A549 (cell line): ENCODE measurements at regions of chr17 and their contacts with region 1.

Region 1: DNA sequence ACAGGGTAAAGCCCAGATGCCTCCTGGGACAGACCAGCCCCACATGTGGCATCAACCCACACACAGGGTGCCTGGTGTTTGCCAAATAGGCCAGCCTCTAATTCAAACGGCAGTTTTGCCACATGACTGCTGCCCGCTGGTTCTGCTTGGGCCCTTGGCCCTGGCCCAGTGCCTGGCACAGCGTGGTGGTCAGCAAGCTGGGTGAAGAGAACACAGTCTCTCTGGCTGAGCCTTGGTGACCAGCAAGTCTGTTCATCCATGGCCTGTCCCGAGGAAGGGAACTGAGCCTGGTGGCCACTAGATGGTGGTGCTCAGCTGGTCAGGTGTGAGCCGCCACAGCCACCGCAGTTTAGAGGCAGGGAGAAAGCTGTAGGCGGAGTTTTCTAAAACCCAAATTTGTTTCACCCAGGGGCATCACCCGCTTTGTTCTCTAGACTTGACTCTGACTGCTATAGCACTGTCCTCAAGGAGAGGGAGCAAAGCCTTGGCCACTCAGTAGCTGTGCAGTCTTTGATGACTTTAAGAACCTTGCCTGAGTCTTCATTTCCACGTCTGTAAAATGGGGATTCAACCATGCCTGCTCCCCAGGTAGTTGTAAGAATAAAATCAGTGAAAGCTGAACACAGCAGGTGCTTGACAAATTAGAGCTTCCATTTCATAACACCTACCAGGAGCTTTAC is 4.7 kb upstream of the GFAP start:
- DNase-seq: peak; percentile 89 to 97
- ATAC-seq: peak; percentile 85 to 90
- H3K4me3 ChIP-seq: no peak overlapping the region
- H3K27ac ChIP-seq: peak overlapping the region; percentile 14 to 80; a peak in 4 of 6 replicates
- H3K4me1 ChIP-seq: peaks cover 23% of the 10 kb centered on the region
- CTCF ChIP-seq: peak; percentile 98
- EP300 ChIP-seq: no peak
- POLR2A ChIP-seq: no peak
- RAD21 ChIP-seq: peak; percentile 99

Region 2: GRCh38 chr17:44775136-44775837 is 144.7 kb before region 1 on chr17:
- CTCF ChIA-PET with region 1: interaction called, 13 read pairs
- POLR2A ChIA-PET with region 1: no interaction called
- DNase-seq: peak; percentile 99
- ATAC-seq: peak; percentile 78 to 92
- H3K4me3 ChIP-seq: peak overlapping the region; percentile 54
- H3K27ac ChIP-seq: peak overlapping the region; percentile 13 to 64; a peak in 4 of 6 replicates
- H3K4me1 ChIP-seq: peaks cover 17% of the 10 kb centered on the region
- CTCF ChIP-seq: peak; percentile 34; the same call in 1 of the 3 replicates
- EP300 ChIP-seq: no peak
- POLR2A ChIP-seq: peak; percentile 58
- RAD21 ChIP-seq: peak in 1 of 2 experiments; percentile 8; a peak in 1 of 5 replicates

Region 3: GRCh38 chr17:44884941-44885340 is 35.1 kb before region 1 on chr17:
- CTCF ChIA-PET with region 1: interaction called, 10 read pairs
- POLR2A ChIA-PET with region 1: no interaction called
- DNase-seq: no peak
- ATAC-seq: no peak
- H3K4me3 ChIP-seq: no peak overlapping the region
- H3K27ac ChIP-seq: no peak overlapping the region
- H3K4me1 ChIP-seq: peaks cover 15% of the 10 kb centered on the region
- CTCF ChIP-seq: no peak
- EP300 ChIP-seq: no peak
- POLR2A ChIP-seq: no peak
- RAD21 ChIP-seq: no peak

Region 4: DNA sequence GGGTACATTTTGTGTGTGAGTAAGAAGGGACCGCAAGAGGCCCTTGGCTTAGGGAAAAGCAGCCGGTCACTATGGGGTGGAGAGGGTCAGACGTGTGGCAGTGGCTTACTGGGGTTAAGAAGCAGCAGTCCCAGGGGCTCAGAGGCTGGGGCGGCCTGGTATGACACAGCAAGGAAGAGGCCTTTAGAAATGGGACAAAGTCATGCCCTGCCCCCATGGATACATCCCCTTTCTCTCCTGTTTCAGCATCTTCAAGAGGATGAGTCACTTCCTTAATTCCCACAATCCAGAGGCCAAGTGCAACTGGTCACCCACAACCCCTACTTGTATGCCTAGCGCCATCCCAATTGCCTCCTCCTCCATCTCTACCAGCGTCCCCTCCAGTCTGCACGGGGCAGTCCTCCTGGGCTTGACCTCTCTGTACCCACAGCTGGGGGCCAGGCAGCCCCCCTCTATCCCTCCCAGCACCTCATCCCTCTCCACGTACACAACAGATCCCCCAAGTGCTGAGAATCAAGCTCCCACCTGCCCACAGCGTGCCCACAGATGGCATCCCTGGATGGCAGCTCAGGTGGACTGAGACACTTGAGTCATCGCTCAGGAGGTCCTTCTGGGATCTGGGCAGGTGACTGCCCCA is 13.9 kb before region 1 on chr17:
- CTCF ChIA-PET with region 1: interaction called, 217 read pairs
- POLR2A ChIA-PET with region 1: no interaction called
- DNase-seq: peak; percentile 74 to 89
- ATAC-seq: peak; percentile 61 to 68
- H3K4me3 ChIP-seq: no peak overlapping the region
- H3K27ac ChIP-seq: peak overlapping the region; percentile 91 to 94
- H3K4me1 ChIP-seq: peaks cover 63% of the 10 kb centered on the region
- CTCF ChIP-seq: no peak
- EP300 ChIP-seq: peak in 1 of 2 experiments; percentile 59; a peak in 3 of 5 replicates
- POLR2A ChIP-seq: no peak
- RAD21 ChIP-seq: no peak

Region 5: GRCh38 chr17:44968226-44969143 is 48.5 kb after region 1 on chr17 and contains the start of gene C1QL1:
- CTCF ChIA-PET with region 1: interaction called, 752 read pairs
- POLR2A ChIA-PET with region 1: no interaction called
- DNase-seq: peak; percentile 90 to 96
- ATAC-seq: peak; percentile 76 to 91
- H3K4me3 ChIP-seq: peak within 1 kb of the TSS; percentile 59
- H3K27ac ChIP-seq: peak within 1 kb of the TSS; percentile 65 to 82
- H3K4me1 ChIP-seq: peaks cover 35% of the 10 kb centered on the region
- CTCF ChIP-seq: no peak
- EP300 ChIP-seq: no peak
- POLR2A ChIP-seq: peak; percentile 31; the same call in 1 of the 2 replicates
- RAD21 ChIP-seq: no peak
- polyA plus RNA-seq, gene C1QL1: 1.9 and 2.6 TPM in 2 replicates

Region 6: DNA sequence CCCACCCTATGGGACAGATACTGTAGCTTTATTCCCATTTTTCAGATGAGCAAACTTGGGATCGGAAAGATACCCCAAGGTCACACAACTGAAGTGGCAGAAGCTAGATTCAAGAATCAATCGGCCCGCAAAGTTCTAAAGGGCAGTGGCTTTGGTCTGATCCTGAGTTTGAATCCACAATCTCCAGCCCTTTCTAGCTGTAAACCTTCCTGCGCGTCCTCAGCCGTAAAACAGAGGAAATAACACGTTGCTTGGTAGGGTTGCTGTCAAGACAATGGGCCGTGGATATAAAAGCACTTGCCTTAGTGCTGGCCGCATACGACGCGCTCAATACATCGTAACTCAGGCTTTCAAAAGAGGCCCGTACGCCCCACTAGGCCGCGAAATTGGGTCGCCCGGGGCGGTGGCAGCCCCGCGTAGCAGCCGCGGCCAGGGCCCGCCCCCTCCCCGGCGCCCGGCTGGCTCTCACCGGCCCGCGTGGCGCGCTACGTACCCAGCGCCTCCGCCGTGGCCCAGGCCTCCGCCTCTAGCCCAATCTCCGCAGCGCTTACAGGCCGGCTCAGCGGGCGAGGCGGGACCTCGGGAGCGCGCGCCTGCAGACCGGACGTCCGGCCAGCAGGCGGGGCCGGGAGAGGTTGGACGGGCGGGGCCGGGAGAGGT is 131.2 kb after region 1 on chr17 and contains the start of gene DCAKD:
- CTCF ChIA-PET with region 1: interaction called, 1,853 read pairs
- POLR2A ChIA-PET with region 1: no interaction called
- DNase-seq: peak; percentile 93 to 97
- ATAC-seq: peak; percentile 97 to 99
- H3K4me3 ChIP-seq: peak within 1 kb of the TSS; percentile 54
- H3K27ac ChIP-seq: peak within 1 kb of the TSS; percentile 91 to 95
- H3K4me1 ChIP-seq: peaks cover 35% of the 10 kb centered on the region
- CTCF ChIP-seq: no peak
- EP300 ChIP-seq: no peak
- POLR2A ChIP-seq: peak; percentile 75
- RAD21 ChIP-seq: no peak
- polyA plus RNA-seq, gene DCAKD: 21.4 and 26.2 TPM in 2 replicates